ENCODE measurements at regions of chr12 and their contacts with region 1.

Region 1: DNA sequence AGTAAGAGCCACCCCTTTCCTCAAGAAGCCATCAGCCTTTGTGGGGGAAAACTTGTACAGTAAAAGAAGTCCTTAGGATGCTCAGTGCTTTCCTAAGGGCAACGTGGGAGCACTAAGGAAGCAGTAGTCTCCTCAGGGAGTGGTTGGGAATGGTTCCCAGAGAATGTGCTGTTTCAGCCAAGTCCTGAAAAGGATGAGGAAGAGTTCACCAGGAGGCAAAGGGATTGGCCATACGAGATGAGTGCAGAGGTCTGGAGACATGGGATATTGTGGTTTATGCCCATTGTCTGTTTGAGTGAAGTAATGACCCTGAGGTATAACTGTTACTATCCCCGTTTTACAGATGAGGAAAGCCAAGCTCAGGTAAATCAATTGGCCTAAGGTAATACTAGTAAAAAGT is 86.0 kb upstream of the ATF1 start:
- DNase-seq: peak; percentile 93
- ATAC-seq: peak; percentile 75
- H3K4me3 ChIP-seq: no peak overlapping the region
- H3K27ac ChIP-seq: peak overlapping the region; percentile 88
- H3K4me1 ChIP-seq: peaks cover 67% of the 10 kb centered on the region
- H3K27me3 ChIP-seq: no peaks in the 10 kb centered on the region
- CTCF ChIP-seq: no peak

Region 2: GRCh38 chr12:50637870-50638481 is 39.9 kb before region 1 on chr12:
- CTCF ChIA-PET with region 1: interaction called, 4 read pairs
- POLR2A ChIA-PET with region 1: no interaction called
- intact Hi-C with region 1: loop called (anchors 2 kb)
- DNase-seq: peak; percentile 73
- ATAC-seq: no peak
- H3K4me3 ChIP-seq: no peak overlapping the region
- H3K27ac ChIP-seq: peak overlapping the region; percentile 22
- H3K4me1 ChIP-seq: peaks cover 54% of the 10 kb centered on the region
- H3K27me3 ChIP-seq: no peaks in the 10 kb centered on the region
- CTCF ChIP-seq: peak; percentile 88

Region 3: DNA sequence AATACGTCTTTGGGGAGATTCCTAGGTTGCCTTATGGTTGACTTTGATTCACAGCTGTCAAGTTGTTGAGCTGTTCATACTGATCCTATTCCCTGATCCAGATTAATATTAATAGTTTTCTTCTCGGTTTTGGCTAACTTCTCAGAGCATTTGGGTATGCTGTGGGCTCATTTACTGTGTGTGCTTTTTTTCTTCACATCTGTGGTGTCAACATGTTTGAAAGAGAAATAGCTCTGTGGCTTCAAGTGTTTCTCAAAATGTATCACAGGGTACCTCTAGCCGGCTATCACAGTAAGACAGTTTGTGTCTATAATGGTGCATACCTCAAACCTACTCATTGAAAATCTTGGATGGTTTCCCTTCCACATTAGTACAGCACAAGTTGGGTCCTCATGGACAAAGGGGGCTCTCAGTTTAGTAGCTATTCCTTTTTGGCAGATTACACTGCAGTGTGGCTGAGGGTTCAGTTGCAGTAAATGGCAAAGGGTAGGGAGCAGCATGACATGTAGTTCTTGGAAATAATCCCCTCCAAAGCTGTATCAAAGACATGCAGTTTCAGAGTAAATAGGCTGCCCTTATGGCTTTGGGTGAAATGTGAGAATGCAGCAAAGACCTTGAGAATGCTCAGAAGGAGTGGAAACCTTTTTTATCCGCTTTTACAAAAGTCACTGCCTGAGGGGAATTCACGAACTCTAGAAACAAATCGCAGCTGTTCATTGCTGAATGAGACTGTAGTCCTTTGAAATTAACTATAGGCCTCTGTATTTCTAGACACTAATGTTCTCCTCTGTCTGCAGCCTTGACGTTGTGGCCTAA is 16.4 kb before region 1 on chr12:
- CTCF ChIA-PET with region 1: interaction called, 5 read pairs
- POLR2A ChIA-PET with region 1: interaction called, 19 read pairs
- intact Hi-C with region 1: no loop called
- DNase-seq: no peak
- ATAC-seq: no peak
- H3K4me3 ChIP-seq: no peak overlapping the region
- H3K27ac ChIP-seq: no peak overlapping the region
- H3K4me1 ChIP-seq: peaks cover 19% of the 10 kb centered on the region
- H3K27me3 ChIP-seq: no peaks in the 10 kb centered on the region
- CTCF ChIP-seq: no peak